Cardiac septum (tissue), 1 donor: ENCODE measurements at regions of chr18 and their contacts with region 1.

Region 1: DNA sequence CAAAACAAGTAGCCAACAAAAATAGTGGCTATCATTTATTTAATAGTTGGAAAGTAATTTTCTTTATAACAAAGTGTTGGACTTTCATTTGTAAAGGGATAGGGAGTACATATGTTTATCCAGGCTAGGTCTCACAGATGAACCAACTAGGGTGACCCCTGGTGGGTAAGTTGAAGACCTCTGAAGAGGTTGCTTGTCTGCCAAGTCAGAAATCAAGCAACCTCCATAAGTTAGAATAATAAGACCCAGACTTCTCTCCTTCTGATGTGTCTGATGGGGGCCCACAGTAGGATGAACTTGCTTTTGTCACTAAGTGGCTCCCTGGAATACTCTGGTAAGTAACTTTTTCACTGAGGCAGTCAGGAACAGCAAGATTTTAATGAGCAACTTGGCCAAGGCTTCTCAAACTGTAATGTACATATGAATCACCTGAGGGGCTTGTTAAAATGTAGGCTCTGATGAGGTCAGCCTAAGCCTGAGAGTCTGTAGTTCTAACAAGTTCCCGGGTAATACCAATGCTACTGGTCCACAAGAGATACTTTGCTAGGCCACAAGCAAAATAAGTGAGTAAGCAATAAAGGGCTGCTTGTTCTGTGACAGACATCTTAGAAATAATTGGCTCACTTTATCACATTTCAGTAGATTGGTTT is 319.6 kb downstream of the PIK3C3 start:
- DNase-seq: no peak

Region 2: GRCh38 chr18:42126586-42126985 is 148.0 kb before region 1 on chr18:
- intact Hi-C with region 1: loop called (anchors 10 kb)
- DNase-seq: no peak